Uterus (tissue), 4 donors: ENCODE measurements at regions of chr1 and their contacts with region 1.

Region 1: DNA sequence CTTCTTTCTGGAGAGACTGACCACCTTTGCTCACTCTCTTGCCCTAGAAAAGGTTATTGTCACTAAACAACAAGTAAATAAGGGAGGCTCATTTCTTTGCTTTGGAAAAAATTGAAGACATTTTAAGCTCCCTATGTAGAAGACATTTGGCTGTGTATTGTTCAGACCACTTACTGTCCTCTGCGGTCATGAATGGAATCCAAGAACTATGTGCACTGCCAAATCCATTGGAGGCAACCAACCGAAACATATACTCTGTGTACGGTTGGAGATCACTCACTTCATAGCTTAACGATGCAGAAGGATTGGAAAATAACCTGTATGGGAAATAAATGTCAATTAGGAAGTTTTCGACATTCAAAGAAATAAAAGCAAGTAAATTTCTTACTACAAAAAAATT is 332.8 kb downstream of the KCTD3 start:
- DNase-seq: no peak
- H3K4me3 ChIP-seq: no peak overlapping the region
- H3K27ac ChIP-seq: no peak overlapping the region
- H3K4me1 ChIP-seq: no peaks in the 10 kb centered on the region
- H3K27me3 ChIP-seq: no peaks in the 10 kb centered on the region
- CTCF ChIP-seq: no peak
- POLR2A ChIP-seq: no peak

Region 2: GRCh38 chr1:215761446-215761845 is 138.5 kb before region 1 on chr1:
- intact Hi-C with region 1: no loop called
- DNase-seq: no peak
- H3K4me3 ChIP-seq: no peak overlapping the region
- H3K27ac ChIP-seq: no peak overlapping the region
- H3K4me1 ChIP-seq: no peaks in the 10 kb centered on the region
- H3K27me3 ChIP-seq: no peaks in the 10 kb centered on the region
- CTCF ChIP-seq: no peak
- POLR2A ChIP-seq: no peak

Region 3: DNA sequence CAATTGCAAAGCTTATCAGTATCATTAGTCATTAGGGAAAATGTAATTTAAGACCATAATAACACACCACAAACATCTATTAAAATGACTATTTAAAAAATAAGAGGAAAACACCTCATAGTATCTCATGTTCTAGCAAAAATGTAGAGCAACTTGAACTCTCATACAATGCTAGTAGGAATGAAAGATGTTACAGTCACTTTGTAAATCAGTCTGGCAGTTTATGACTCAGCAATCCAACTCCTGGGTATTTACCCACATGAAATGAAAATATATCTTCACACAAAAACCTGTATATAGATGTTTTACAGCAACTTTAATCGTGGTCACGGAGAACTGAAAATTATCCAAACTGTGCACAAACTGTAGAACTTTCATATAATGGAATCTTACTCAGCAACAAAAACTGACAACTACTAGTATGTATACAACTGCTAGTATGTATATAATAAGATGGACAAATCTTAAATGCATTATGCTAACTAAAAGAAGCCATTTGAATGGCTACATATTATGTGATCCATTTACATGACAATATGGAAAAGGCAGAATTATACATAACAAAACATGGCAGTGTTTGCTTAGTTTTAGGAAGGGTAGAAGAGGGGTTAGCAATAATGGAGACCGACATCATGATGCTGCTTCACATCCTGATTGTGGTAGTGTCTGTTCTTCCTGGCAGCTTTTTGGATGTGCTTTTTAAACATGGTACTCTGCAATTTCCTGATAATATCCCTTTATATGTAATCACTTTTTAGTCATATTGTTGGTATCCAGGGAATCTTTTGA is 65.8 kb before region 1 on chr1:
- intact Hi-C with region 1: loop called (anchors 5 kb)
- DNase-seq: no peak
- H3K4me3 ChIP-seq: no peak overlapping the region
- H3K27ac ChIP-seq: no peak overlapping the region
- H3K4me1 ChIP-seq: no peaks in the 10 kb centered on the region
- H3K27me3 ChIP-seq: no peaks in the 10 kb centered on the region
- CTCF ChIP-seq: no peak
- POLR2A ChIP-seq: no peak

Region 4: GRCh38 chr1:215963041-215963440 is 63.1 kb after region 1 on chr1:
- intact Hi-C with region 1: no loop called
- DNase-seq: no peak
- H3K4me3 ChIP-seq: no peak overlapping the region
- H3K27ac ChIP-seq: no peak overlapping the region
- H3K4me1 ChIP-seq: no peaks in the 10 kb centered on the region
- H3K27me3 ChIP-seq: no peaks in the 10 kb centered on the region
- CTCF ChIP-seq: no peak
- POLR2A ChIP-seq: no peak